ENCODE measurements at regions of chr16 and their contacts with region 1.

Region 1: GRCh38 chr16:20849587-20850390 is 43.5 kb downstream of the REXO5 start:
- DNase-seq: peak; percentile 50
- ATAC-seq: peak; percentile 74
- H3K4me3 Mint-ChIP-seq: no peak overlapping the region
- H3K27ac Mint-ChIP-seq: no peak overlapping the region
- H3K4me1 Mint-ChIP-seq: peaks cover 5% of the 10 kb centered on the region
- H3K27me3 Mint-ChIP-seq: no peaks in the 10 kb centered on the region
- CTCF ChIP-seq: peak; percentile 95

Region 2: DNA sequence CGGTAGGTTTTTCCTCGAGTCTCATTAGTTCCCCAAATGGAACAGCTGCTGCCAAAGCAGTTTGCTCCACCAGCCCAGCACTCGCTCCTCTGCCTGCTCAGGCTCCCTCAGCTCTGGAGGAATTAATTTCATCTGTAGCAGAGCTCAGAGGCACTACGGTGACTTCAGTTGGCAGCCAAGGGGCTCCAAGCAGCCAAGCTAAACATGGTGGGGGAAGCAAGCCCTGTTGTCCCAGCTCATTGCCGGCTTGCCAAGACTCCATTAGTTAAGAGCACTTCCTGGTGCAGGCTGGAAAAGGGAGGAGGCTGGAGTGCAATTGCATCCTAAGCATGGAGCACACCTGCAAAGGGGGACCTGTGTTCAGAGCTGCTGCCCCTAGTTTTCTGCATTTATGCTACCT is 886.5 kb before region 1 on chr16:
- CTCF ChIA-PET with region 1: no interaction called
- POLR2A ChIA-PET with region 1: no interaction called
- intact Hi-C with region 1: no loop called
- DNase-seq: no peak
- ATAC-seq: no peak
- H3K4me3 Mint-ChIP-seq: no peak overlapping the region
- H3K27ac Mint-ChIP-seq: no peak overlapping the region
- H3K4me1 Mint-ChIP-seq: no peaks in the 10 kb centered on the region
- H3K27me3 Mint-ChIP-seq: peaks cover 2% of the 10 kb centered on the region
- CTCF ChIP-seq: no peak

Region 3: DNA sequence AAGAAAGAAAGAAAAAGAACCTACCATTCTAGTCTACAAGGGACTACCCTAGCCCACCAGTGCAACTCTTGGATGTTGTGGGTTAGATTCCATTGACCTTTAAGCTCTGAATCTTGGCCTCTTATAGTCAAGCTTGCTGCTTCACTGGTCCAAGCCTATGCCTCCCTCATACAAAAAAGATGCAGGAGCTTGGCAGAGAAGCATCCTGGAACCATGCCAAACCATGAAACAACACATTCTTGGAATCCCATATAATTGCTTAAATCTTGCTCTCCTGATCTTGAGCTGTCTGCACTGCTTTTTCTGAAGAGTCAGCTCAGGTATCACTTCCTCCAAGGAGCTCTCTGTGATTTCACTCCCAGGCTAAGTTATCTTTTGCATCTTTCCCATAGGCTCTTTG is 658.2 kb before region 1 on chr16:
- CTCF ChIA-PET with region 1: no interaction called
- POLR2A ChIA-PET with region 1: no interaction called
- intact Hi-C with region 1: no loop called
- DNase-seq: no peak
- ATAC-seq: no peak
- H3K4me3 Mint-ChIP-seq: no peak overlapping the region
- H3K27ac Mint-ChIP-seq: no peak overlapping the region
- H3K4me1 Mint-ChIP-seq: no peaks in the 10 kb centered on the region
- H3K27me3 Mint-ChIP-seq: no peaks in the 10 kb centered on the region
- CTCF ChIP-seq: no peak

Region 4: GRCh38 chr16:20568404-20568803 is 281.4 kb before region 1 on chr16:
- CTCF ChIA-PET with region 1: no interaction called
- POLR2A ChIA-PET with region 1: no interaction called
- intact Hi-C with region 1: no loop called
- DNase-seq: no peak
- ATAC-seq: no peak
- H3K4me3 Mint-ChIP-seq: no peak overlapping the region
- H3K27ac Mint-ChIP-seq: no peak overlapping the region
- H3K4me1 Mint-ChIP-seq: no peaks in the 10 kb centered on the region
- H3K27me3 Mint-ChIP-seq: no peaks in the 10 kb centered on the region
- CTCF ChIP-seq: no peak

Region 5: GRCh38 chr16:20747030-20747816 is 102.6 kb before region 1 on chr16:
- CTCF ChIA-PET with region 1: no interaction called
- POLR2A ChIA-PET with region 1: no interaction called
- intact Hi-C with region 1: no loop called
- DNase-seq: no peak
- ATAC-seq: no peak
- H3K4me3 Mint-ChIP-seq: no peak overlapping the region
- H3K27ac Mint-ChIP-seq: no peak overlapping the region
- H3K4me1 Mint-ChIP-seq: peaks cover under 1% of the 10 kb centered on the region
- H3K27me3 Mint-ChIP-seq: peaks cover 2% of the 10 kb centered on the region
- CTCF ChIP-seq: no peak

Region 6: DNA sequence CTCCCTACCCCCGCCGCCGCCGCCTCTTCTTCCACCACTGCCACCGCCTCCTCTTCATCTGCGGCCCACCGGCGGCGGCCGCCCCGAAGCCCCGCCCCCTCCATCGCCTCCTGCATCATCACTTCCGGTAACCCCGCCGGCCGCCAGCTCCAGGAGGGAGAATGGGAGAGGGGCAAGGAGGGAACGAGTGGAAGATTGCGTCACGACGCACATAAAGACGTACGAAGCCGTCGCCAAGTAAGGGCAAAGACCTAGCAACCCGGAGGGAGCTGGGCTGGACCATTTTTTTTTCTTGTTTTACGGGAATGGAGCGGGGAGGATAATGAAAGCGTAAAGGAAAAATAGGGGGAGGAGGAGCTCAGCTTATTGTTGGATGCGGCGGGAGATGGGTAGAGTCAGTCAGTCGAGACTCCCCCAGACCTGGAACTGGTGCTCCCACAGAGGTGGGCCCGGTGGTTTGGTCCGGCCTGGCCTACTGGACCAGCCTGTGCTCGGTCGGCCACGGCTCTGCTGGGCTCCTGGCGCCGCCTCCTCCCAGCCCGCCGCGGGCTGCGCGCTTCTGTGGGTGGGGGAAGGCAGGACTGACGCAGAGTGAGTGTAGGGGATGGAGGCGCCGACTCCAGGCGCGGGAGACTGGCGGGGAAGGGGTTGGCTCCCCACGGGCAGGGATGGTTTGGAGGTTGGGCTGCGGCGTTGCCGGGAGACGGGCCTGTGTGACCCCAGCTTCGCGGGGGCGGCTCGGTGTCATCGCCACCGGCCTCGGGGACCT is 50.7 kb after region 1 on chr16 and contains the starts of genes DCUN1D3 and LYRM1:
- CTCF ChIA-PET with region 1: no interaction called
- POLR2A ChIA-PET with region 1: no interaction called
- intact Hi-C with region 1: loop called (anchors 10 kb)
- DNase-seq: peak; percentile 75
- ATAC-seq: peak; percentile 76
- H3K4me3 Mint-ChIP-seq: peak within 1 kb of the TSS; percentile 91
- H3K27ac Mint-ChIP-seq: peak within 1 kb of the TSS; percentile 95
- H3K4me1 Mint-ChIP-seq: peaks cover 61% of the 10 kb centered on the region
- H3K27me3 Mint-ChIP-seq: no peaks in the 10 kb centered on the region
- CTCF ChIP-seq: no peak
- total RNA-seq, gene DCUN1D3: 4.1 and 4.7 TPM in 2 replicates
- total RNA-seq, gene LYRM1: 20.7 and 22.4 TPM in 2 replicates

Region 7: DNA sequence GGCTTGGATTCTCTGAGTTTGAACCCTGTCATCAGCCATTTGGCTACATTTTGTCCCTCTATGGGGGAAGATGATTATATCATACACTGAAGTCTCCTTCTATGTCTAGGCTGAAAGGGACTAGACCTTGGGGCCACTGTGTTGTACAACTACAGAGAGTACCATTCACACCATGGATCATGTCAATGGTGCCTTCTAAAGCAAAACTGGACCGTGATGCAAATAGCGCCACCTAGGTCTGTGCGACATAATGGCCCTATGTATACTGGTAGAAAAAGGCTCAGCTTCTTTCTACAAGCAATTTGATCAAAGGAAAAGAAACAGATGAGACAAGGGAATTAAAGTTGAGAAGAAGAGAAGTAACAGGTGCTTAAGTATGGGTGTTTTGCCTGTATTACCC is 151.5 kb after region 1 on chr16:
- CTCF ChIA-PET with region 1: interaction called, 8 read pairs
- POLR2A ChIA-PET with region 1: no interaction called
- intact Hi-C with region 1: loop called (anchors 1 kb)
- DNase-seq: no peak
- ATAC-seq: no peak
- H3K4me3 Mint-ChIP-seq: no peak overlapping the region
- H3K27ac Mint-ChIP-seq: no peak overlapping the region
- H3K4me1 Mint-ChIP-seq: no peaks in the 10 kb centered on the region
- H3K27me3 Mint-ChIP-seq: peaks cover 8% of the 10 kb centered on the region
- CTCF ChIP-seq: no peak

Region 8: GRCh38 chr16:21101631-21102420 is 252.0 kb after region 1 on chr16:
- CTCF ChIA-PET with region 1: interaction called, 7 read pairs
- POLR2A ChIA-PET with region 1: no interaction called
- intact Hi-C with region 1: loop called (anchors 1 kb)
- DNase-seq: no peak
- ATAC-seq: no peak
- H3K4me3 Mint-ChIP-seq: no peak overlapping the region
- H3K27ac Mint-ChIP-seq: no peak overlapping the region
- H3K4me1 Mint-ChIP-seq: no peaks in the 10 kb centered on the region
- H3K27me3 Mint-ChIP-seq: peaks cover 22% of the 10 kb centered on the region
- CTCF ChIP-seq: no peak

Region 9: GRCh38 chr16:21277927-21278706 is 428.3 kb after region 1 on chr16 and contains the start of gene CRYM:
- CTCF ChIA-PET with region 1: no interaction called
- POLR2A ChIA-PET with region 1: no interaction called
- intact Hi-C with region 1: loop called (anchors 1 kb)
- DNase-seq: peak; percentile 76
- ATAC-seq: peak; percentile 95
- H3K4me3 Mint-ChIP-seq: peak within 1 kb of the TSS; percentile 79
- H3K27ac Mint-ChIP-seq: no peak within 1 kb of the TSS
- H3K4me1 Mint-ChIP-seq: peaks cover 46% of the 10 kb centered on the region
- H3K27me3 Mint-ChIP-seq: peaks cover 16% of the 10 kb centered on the region
- CTCF ChIP-seq: peak; percentile 42
- total RNA-seq, gene CRYM: 4.2 and 4.5 TPM in 2 replicates